PC-3 (cell line): ENCODE measurements at regions of chr18 and their contacts with region 1.

Region 1: GRCh38 chr18:7902399-7902839 is 335.3 kb downstream of the PTPRM start:
- DNase-seq: no peak
- ATAC-seq: no peak
- H3K4me3 ChIP-seq: no peak overlapping the region
- H3K27ac ChIP-seq: peak overlapping the region; percentile 35
- H3K4me1 ChIP-seq: peaks cover 38% of the 10 kb centered on the region
- H3K27me3 ChIP-seq: no peaks in the 10 kb centered on the region
- CTCF ChIP-seq: no peak

Region 2: GRCh38 chr18:7926526-7926925 is 24.1 kb after region 1 on chr18:
- CTCF ChIA-PET with region 1: no interaction called
- POLR2A ChIA-PET with region 1: no interaction called
- intact Hi-C with region 1: loop called (anchors 1 kb)
- DNase-seq: peak; percentile 48
- ATAC-seq: 0 out of 2 replicates have a peak, but pooled peaks have one; percentile 2
- H3K4me3 ChIP-seq: no peak overlapping the region
- H3K27ac ChIP-seq: no peak overlapping the region
- H3K4me1 ChIP-seq: peaks cover 34% of the 10 kb centered on the region
- H3K27me3 ChIP-seq: no peaks in the 10 kb centered on the region
- CTCF ChIP-seq: peak; percentile 59

Region 3: DNA sequence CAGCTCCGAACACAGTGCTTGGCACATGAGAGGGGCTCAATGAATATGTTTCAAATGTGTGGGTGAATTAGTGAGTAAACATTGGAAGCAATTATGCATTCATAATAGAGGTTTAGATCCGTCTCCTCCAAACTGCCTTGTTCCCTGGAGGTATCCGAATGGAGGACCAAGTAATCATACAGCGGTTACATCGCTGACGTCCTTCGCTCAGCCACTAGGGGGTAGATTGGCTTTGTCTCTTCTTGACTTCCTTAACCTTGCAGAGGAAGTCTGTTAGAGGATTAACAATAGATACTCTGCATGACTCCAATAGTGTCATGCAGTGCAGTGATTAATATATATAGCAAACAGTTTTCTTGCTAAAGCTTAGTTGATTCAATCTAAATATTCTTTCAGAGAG is 181.7 kb after region 1 on chr18:
- CTCF ChIA-PET with region 1: no interaction called
- POLR2A ChIA-PET with region 1: no interaction called
- intact Hi-C with region 1: loop called (anchors 5 kb)
- DNase-seq: peak; percentile 82
- ATAC-seq: peak; percentile 97
- H3K4me3 ChIP-seq: no peak overlapping the region
- H3K27ac ChIP-seq: no peak overlapping the region
- H3K4me1 ChIP-seq: peaks cover 4% of the 10 kb centered on the region; the same call in 1 of the 2 replicates
- H3K27me3 ChIP-seq: no peaks in the 10 kb centered on the region
- CTCF ChIP-seq: peak; percentile 93